Activated CD8-positive, alpha-beta T cell treated with anti-CD3 and anti-CD28 coated beads, Interleukin-2, amount 10 ng/mL, durations not matched to agents 7 days and 5 days (primary cell): ENCODE measurements at regions of chr15 and their contacts with region 1.

Region 1: DNA sequence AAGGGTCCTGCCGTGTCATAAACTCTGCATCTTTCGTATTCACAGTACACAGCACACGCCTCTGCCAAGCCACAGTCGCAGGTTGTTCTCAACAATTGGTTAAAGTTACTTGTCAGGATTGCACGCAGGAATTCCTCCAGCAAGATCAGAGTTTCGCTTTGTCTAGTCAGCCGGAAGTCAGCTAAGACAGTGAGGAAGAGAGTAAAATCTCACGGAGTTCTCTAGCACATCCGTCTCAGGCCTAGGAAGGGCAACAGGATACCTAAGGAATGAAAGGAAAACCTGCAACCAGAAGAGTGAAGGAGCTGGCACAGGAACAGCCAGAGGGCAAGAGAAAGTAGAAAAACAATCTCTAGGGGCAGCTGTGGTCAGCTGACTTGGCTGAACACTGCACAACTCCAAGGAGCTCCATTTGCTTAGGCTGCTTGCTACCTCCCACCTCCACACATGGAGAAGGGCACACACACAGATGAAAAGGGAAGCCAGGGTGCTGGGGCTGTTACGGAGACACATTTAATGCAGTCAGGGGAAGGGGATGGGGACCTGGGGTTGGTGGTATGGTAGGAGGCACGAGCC is 23.7 kb downstream of the RORA start:
- DNase-seq: no peak
- ATAC-seq: no peak
- H3K4me3 Mint-ChIP-seq: no peak overlapping the region
- H3K27ac Mint-ChIP-seq: no peak overlapping the region
- H3K4me1 Mint-ChIP-seq: no peaks in the 10 kb centered on the region
- H3K27me3 Mint-ChIP-seq: no peaks in the 10 kb centered on the region

Region 2: DNA sequence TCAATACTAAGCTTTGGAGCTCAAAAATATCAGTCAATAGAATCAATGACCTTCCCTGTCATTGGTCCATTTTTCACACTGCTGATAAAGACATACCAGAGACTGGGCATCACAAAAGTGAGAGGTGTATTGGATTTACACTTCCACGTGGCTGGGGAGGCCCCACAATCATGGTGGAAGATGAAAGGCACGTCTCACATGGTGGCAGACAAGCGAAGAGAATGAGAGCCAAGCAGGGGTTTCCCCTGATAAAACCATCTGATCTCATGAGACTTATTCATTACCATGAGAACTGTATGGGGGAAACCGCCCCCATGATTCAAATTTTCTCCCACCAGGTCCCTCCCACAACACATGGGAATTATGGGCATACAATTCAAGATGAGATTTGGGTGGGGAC is 889.6 kb before region 1 on chr15:
- CTCF ChIA-PET with region 1: no interaction called
- POLR2A ChIA-PET with region 1: no interaction called
- DNase-seq: no peak
- ATAC-seq: no peak
- H3K4me3 Mint-ChIP-seq: no peak overlapping the region
- H3K27ac Mint-ChIP-seq: no peak overlapping the region
- H3K4me1 Mint-ChIP-seq: no peaks in the 10 kb centered on the region
- H3K27me3 Mint-ChIP-seq: peaks cover 17% of the 10 kb centered on the region

Region 3: GRCh38 chr15:61084944-61085367 is 120.5 kb before region 1 on chr15:
- CTCF ChIA-PET with region 1: no interaction called
- POLR2A ChIA-PET with region 1: no interaction called
- DNase-seq: no peak
- ATAC-seq: no peak
- H3K4me3 Mint-ChIP-seq: no peak overlapping the region
- H3K27ac Mint-ChIP-seq: no peak overlapping the region
- H3K4me1 Mint-ChIP-seq: peaks cover 1% of the 10 kb centered on the region
- H3K27me3 Mint-ChIP-seq: peaks cover 9% of the 10 kb centered on the region

Region 4: DNA sequence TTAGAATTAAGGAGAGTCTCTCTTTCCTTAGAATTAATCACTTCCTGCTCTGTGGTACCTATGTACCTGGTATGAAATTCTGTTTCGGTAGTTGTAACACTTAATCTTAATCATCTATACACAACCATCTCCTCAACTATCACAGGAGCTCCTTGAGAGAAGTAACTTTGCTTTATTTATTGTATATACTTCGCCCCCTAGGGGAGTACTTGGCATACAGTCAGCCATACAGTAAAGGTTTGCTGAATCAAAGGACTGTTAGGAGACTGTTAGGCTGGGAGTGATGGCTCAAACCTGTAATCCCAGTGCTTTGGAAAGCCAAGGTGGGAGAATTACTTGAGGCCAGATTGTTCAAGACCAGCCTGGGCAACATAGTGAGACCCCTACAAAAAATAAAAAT is 21.0 kb before region 1 on chr15:
- CTCF ChIA-PET with region 1: no interaction called
- POLR2A ChIA-PET with region 1: no interaction called
- DNase-seq: no peak
- ATAC-seq: no peak
- H3K4me3 Mint-ChIP-seq: no peak overlapping the region
- H3K27ac Mint-ChIP-seq: no peak overlapping the region
- H3K4me1 Mint-ChIP-seq: no peaks in the 10 kb centered on the region
- H3K27me3 Mint-ChIP-seq: peaks cover 30% of the 10 kb centered on the region

Region 5: GRCh38 chr15:61195116-61196002 is 10.1 kb before region 1 on chr15:
- CTCF ChIA-PET with region 1: interaction called, 10 read pairs
- POLR2A ChIA-PET with region 1: no interaction called
- DNase-seq: peak; percentile 26
- ATAC-seq: no peak
- H3K4me3 Mint-ChIP-seq: no peak overlapping the region
- H3K27ac Mint-ChIP-seq: no peak overlapping the region
- H3K4me1 Mint-ChIP-seq: no peaks in the 10 kb centered on the region
- H3K27me3 Mint-ChIP-seq: peaks cover 7% of the 10 kb centered on the region